ENCODE measurements at regions of chr4 and their contacts with region 1.

Region 1: GRCh38 chr4:150297861-150298474 is 219.7 kb downstream of the DCLK2 start:
- DNase-seq: peak; percentile 56
- H3K4me3 Mint-ChIP-seq: no peak overlapping the region
- H3K27ac Mint-ChIP-seq: no peak overlapping the region
- H3K4me1 Mint-ChIP-seq: peaks cover 6% of the 10 kb centered on the region
- H3K27me3 Mint-ChIP-seq: no peaks in the 10 kb centered on the region

Region 2: GRCh38 chr4:150308824-150309472 is 11.0 kb after region 1 on chr4:
- CTCF ChIA-PET with region 1: interaction called, 15 read pairs
- DNase-seq: no peak
- H3K4me3 Mint-ChIP-seq: no peak overlapping the region
- H3K27ac Mint-ChIP-seq: no peak overlapping the region
- H3K4me1 Mint-ChIP-seq: no peaks in the 10 kb centered on the region
- H3K27me3 Mint-ChIP-seq: no peaks in the 10 kb centered on the region

Region 3: DNA sequence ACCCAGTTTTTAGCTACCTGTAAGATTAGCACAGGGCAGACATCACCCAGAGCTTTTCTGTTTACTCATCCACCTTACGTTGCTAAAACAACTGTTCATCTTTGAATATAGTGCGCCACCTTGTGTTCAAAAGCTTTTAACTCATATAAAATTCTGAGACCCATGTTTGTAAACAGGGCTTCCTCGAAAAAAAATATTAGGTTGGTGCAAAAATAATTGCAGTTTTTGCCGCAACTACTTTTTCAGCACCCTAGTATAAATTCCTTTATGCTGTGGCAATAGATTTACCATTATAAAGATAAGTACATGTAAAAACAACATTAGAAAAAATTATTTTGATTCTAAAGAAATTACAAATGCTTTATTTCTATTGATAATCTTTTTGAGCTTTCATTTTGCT is 569.2 kb after region 1 on chr4:
- CTCF ChIA-PET with region 1: interaction called, 45 read pairs
- DNase-seq: peak; percentile 22
- H3K4me3 Mint-ChIP-seq: no peak overlapping the region
- H3K27ac Mint-ChIP-seq: no peak overlapping the region
- H3K4me1 Mint-ChIP-seq: no peaks in the 10 kb centered on the region
- H3K27me3 Mint-ChIP-seq: no peaks in the 10 kb centered on the region